ENCODE measurements at regions of chr3 and their contacts with region 1.

Region 1: DNA sequence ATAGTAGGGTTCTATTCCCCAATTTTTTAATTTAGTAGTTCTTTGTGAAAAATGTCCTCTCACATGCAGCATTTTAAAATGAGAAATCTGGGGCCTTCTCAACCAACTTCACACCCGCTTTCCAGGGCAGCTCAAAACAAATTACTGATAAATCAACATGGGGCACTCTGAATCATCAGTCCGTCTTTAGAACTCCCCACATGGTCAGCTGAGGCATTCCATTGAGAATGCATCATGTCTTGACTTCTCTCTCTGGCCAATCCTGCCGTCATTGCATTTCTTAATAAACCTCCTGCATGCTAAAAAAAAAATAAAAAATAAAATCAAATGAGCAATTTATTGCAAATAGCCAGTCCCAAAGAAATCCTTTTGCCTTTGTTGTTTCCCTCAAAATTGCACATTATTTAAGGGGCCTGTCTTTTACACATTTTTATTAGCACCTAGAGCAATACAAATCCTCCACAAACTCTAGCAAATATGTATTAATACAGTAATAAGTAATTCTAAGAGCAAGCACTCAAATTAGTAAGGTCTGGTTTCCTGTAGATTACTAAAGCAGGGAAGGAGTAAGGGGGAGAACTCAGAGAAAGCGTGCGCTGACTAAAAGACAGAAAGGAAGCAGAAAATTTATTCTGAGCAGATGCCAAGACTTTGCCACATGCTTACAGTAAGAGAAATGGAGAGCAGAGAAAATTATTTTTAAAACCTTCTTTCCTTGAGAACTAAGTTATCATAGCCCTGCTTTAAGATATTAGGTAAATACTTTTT is 175.7 kb downstream of the TNIK start:
- DNase-seq: peak; percentile 31
- H3K4me3 Mint-ChIP-seq: peak overlapping the region; percentile 24
- H3K27ac Mint-ChIP-seq: peak overlapping the region; percentile 34
- H3K4me1 Mint-ChIP-seq: peaks cover 57% of the 10 kb centered on the region
- H3K27me3 Mint-ChIP-seq: no peaks in the 10 kb centered on the region

Region 2: DNA sequence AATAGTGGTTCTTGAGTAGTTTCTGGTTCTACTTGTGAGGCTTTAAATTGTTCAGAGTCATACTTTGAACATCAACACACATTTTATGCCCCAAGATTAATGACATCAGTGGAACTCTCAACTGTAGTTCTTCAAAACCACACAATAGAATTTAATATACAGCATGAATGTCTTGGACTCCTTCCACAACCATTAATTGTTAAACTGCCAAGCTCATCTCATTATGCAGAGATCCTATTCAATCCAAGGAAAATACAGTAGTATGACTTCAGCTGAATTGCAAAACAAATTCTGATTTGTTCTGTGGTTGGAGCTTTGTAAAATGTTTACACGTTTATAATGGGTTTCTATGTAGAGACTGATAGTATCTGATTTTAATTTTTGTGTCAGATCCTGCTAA is 58.8 kb before region 1 on chr3:
- CTCF ChIA-PET with region 1: no interaction called
- POLR2A ChIA-PET with region 1: no interaction called
- intact Hi-C with region 1: loop called (anchors 2 kb)
- DNase-seq: no peak
- H3K4me3 Mint-ChIP-seq: no peak overlapping the region
- H3K27ac Mint-ChIP-seq: peak overlapping the region; percentile 56
- H3K4me1 Mint-ChIP-seq: peaks cover 41% of the 10 kb centered on the region
- H3K27me3 Mint-ChIP-seq: no peaks in the 10 kb centered on the region

Region 3: GRCh38 chr3:171347301-171348039 is 63.0 kb after region 1 on chr3:
- CTCF ChIA-PET with region 1: no interaction called
- POLR2A ChIA-PET with region 1: no interaction called
- intact Hi-C with region 1: loop called (anchors 2 kb)
- DNase-seq: no peak
- H3K4me3 Mint-ChIP-seq: no peak overlapping the region
- H3K27ac Mint-ChIP-seq: peak overlapping the region; percentile 70
- H3K4me1 Mint-ChIP-seq: peaks cover 66% of the 10 kb centered on the region
- H3K27me3 Mint-ChIP-seq: no peaks in the 10 kb centered on the region

Measured in activated CD4-positive, alpha-beta memory T cell treated with anti-CD3 and anti-CD28 coated beads for 36 hours (primary cell).